ENCODE measurements at regions of chr15 and their contacts with region 1.

Region 1: DNA sequence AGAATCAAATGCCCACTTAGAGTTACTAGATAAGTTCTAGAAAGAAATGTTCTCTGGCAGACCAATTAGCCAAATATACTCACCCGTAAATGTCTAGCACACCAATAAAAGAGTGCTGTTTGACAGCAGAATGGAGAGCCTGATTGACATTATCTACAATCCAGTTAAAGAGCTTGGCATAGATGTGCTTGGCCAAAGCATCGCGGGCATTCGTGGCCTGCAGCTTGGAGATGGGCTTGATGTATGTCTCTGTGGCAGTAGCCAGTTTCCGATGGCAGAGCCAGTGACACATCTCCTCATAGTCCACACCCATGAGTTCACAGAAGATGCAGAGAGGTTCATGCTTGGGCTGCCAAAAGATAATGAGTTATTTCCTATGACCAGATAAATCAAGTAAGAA is 101.5 kb upstream of the MYO5C start:
- DNase-seq: no peak
- ATAC-seq: no peak
- H3K4me3 ChIP-seq: no peak overlapping the region
- H3K4me3 Mint-ChIP-seq: no peak overlapping the region
- H3K27ac ChIP-seq: no peak overlapping the region
- H3K27ac Mint-ChIP-seq: no peak overlapping the region
- H3K4me1 ChIP-seq: no peaks in the 10 kb centered on the region
- H3K4me1 Mint-ChIP-seq: no peaks in the 10 kb centered on the region
- H3K27me3 ChIP-seq: no peaks in the 10 kb centered on the region
- H3K27me3 Mint-ChIP-seq: no peaks in the 10 kb centered on the region
- CTCF ChIP-seq: no peak

Region 2: GRCh38 chr15:52370010-52370409 is 27.1 kb before region 1 on chr15:
- CTCF ChIA-PET with region 1: no interaction called
- POLR2A ChIA-PET with region 1: no interaction called
- intact Hi-C with region 1: no loop called
- DNase-seq: peak in 3 of 14 experiments; percentile 6 to 14 (median 9)
- ATAC-seq: no peak
- H3K4me3 ChIP-seq: no peak overlapping the region
- H3K4me3 Mint-ChIP-seq: no peak overlapping the region
- H3K27ac ChIP-seq: no peak overlapping the region
- H3K27ac Mint-ChIP-seq: no peak overlapping the region
- H3K4me1 ChIP-seq: no peaks in the 10 kb centered on the region
- H3K4me1 Mint-ChIP-seq: no peaks in the 10 kb centered on the region
- H3K27me3 ChIP-seq: no peaks in the 10 kb centered on the region
- H3K27me3 Mint-ChIP-seq: no peaks in the 10 kb centered on the region
- CTCF ChIP-seq: no peak

Region 3: GRCh38 chr15:52440400-52440799 is 43.3 kb after region 1 on chr15:
- CTCF ChIA-PET with region 1: no interaction called
- POLR2A ChIA-PET with region 1: no interaction called
- intact Hi-C with region 1: loop called in 1 of 2 experiments (anchors 2 kb)
- DNase-seq: peak in 4 of 14 experiments; percentile 3 to 29 (median 16)
- ATAC-seq: no peak
- H3K4me3 ChIP-seq: no peak overlapping the region
- H3K4me3 Mint-ChIP-seq: no peak overlapping the region
- H3K27ac ChIP-seq: no peak overlapping the region
- H3K27ac Mint-ChIP-seq: no peak overlapping the region
- H3K4me1 ChIP-seq: peaks cover 12% of the 10 kb centered on the region
- H3K4me1 Mint-ChIP-seq: peaks cover 45% of the 10 kb centered on the region
- H3K27me3 ChIP-seq: no peaks in the 10 kb centered on the region
- H3K27me3 Mint-ChIP-seq: no peaks in the 10 kb centered on the region
- CTCF ChIP-seq: no peak

Measured in CD4-positive, alpha-beta T cell (primary cell).